ENCODE measurements at regions of chr5 and their contacts with region 1.

Region 1: DNA sequence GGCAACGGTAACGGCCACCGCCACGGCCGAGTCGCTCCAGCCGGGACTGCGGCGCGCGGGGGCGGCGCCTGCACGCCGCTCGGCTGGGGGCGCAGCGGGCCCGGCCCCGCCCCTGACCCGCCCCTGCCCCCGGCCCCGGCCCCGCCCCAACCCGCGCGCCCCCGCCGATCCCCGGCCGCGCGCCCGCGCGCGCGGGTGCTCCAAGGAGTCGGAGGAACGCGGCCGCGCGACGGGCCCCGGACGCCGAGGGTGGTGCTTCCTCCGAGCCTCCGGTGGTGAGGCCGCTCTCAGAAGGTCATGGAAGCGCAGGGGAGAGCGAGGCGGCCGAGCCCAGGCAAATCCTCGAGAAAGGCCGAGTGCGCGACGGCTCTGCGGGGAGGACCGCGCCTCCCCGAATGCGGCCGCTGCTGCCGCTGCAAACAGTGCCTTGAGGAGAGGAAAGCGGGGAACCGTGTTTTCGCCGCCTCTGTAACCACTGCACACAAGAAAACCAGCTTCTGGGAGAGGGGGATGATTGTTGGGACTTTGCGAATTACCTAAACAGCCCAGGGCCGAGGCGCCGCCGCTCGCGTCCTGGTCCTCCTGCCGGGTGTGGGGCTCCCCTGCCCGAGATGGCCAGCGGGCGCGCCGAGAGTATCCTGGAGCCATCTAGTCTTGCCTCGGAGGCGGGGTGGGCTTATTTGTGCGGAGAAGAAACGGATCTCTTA is at the start of gene LIFR:
- DNase-seq: peak; percentile 87
- H3K4me3 ChIP-seq: peak within 1 kb of the TSS; percentile 87
- H3K27ac ChIP-seq: peak within 1 kb of the TSS; percentile 56
- H3K4me1 ChIP-seq: peaks cover 13% of the 10 kb centered on the region; the same call in 1 of the 2 replicates
- H3K27me3 ChIP-seq: no peaks in the 10 kb centered on the region
- total RNA-seq, gene LIFR: 6.9 and 16.4 TPM in 2 replicates

Region 2: DNA sequence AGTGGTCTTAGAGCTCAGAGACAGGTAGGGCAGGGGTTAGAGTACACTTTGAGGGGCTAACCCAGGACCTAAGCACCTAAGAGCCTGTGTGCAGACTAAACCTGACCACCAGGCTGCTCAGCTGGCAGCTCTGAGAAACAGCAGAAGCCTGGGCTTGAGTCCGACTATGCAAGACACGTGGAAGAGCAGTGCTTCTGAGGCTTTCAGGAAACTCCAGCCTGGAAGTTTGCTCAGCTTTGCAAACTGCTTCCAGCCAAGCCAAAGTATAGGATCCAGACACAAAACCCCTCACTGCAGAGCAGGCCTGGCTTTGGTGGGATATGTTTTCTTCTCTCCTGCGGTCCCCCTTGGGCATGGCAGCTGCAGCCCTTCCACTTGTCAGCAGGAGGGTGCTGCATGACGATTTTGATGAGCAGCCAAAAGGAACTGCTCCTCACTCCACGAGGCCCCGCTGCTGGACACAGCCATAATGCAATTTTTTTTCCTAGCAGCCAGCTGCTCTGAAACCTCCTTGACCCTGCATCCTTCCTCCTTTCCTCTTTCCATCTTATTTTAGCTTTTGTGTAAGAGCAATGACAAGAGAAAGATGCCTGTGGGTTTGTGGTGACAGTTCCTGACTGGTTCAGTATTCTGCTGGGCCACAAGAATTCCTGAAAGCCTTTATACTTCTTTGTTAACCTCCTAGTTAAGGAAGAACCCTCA is 123.4 kb before region 1 on chr5:
- in situ Hi-C with region 1: loop called (anchors 10 kb)
- DNase-seq: peak; percentile 71
- H3K4me3 ChIP-seq: no peak overlapping the region
- H3K27ac ChIP-seq: no peak overlapping the region
- H3K4me1 ChIP-seq: peaks cover 20% of the 10 kb centered on the region
- H3K27me3 ChIP-seq: no peaks in the 10 kb centered on the region